ENCODE measurements at regions of chr7 and their contacts with region 1.

Region 1: GRCh38 chr7:92722541-92722940 is 113.8 kb downstream of the CDK6 start:
- DNase-seq: no peak
- ATAC-seq: no peak
- H3K4me3 ChIP-seq: no peak overlapping the region
- H3K4me3 Mint-ChIP-seq: no peak overlapping the region
- H3K27ac ChIP-seq: no peak overlapping the region
- H3K27ac Mint-ChIP-seq: peak overlapping the region in 1 of 2 donors; percentile 28
- H3K4me1 ChIP-seq: peaks cover 9 to 16% of the 10 kb centered on the region in 2 experiments
- H3K4me1 Mint-ChIP-seq: peaks cover 25 to 47% (median 42%) of the 10 kb centered on the region in 3 donors
- H3K27me3 ChIP-seq: no peaks in the 10 kb centered on the region
- H3K27me3 Mint-ChIP-seq: no peaks in the 10 kb centered on the region

Region 2: GRCh38 chr7:92708111-92709042 is 14.2 kb before region 1 on chr7:
- CTCF ChIA-PET with region 1: no interaction called
- POLR2A ChIA-PET with region 1: no interaction called
- DNase-seq: no peak
- ATAC-seq: no peak
- H3K4me3 ChIP-seq: no peak overlapping the region
- H3K4me3 Mint-ChIP-seq: no peak overlapping the region
- H3K27ac ChIP-seq: no peak overlapping the region
- H3K27ac Mint-ChIP-seq: peak overlapping the region in 1 of 2 donors; percentile 48
- H3K4me1 ChIP-seq: no peaks in the 10 kb centered on the region
- H3K4me1 Mint-ChIP-seq: peaks cover 3 to 25% (median 18%) of the 10 kb centered on the region in 3 donors
- H3K27me3 ChIP-seq: no peaks in the 10 kb centered on the region
- H3K27me3 Mint-ChIP-seq: no peaks in the 10 kb centered on the region

Region 3: DNA sequence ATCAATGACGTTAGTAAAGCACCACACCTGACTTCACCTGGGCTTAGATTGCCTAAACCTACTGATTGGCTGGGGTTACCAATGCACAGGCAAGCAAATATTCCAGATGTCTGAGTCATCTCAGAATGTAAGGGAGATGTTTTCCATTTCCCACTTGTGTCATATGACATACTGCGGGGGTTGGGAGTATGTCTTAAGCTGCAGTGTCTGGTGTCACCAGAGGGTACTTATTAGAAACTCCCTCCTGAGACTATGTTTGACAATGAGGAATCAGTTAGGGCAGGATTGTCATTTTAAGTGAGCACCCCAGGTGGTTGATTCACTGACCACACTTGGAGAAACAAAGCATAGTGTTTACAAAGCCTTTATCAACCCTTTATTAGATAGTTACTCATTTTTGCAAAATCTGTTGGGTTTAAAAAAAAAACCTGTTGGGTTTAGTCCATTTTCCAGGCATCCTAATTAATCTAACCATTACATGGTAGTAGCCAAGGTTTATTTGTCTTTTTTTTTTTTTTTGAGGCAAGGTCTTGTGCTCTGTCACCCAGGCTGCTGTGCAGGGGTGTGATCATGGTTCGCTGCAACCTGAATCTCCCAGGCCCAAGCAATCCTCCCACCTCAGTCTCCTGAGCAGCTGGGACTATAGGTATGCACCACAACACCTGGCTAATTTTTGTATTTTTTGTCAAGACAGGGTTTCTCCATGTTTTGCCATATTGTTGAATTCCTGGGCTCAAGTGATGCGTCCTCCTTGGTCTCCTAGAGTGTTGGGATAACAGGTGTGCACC is 41.3 kb after region 1 on chr7:
- CTCF ChIA-PET with region 1: interaction called in 1 of 2 experiments, 6 read pairs
- POLR2A ChIA-PET with region 1: interaction called in 1 of 2 experiments, 10 read pairs
- DNase-seq: no peak
- ATAC-seq: no peak
- H3K4me3 ChIP-seq: no peak overlapping the region
- H3K4me3 Mint-ChIP-seq: no peak overlapping the region
- H3K27ac ChIP-seq: no peak overlapping the region
- H3K27ac Mint-ChIP-seq: no peak overlapping the region
- H3K4me1 ChIP-seq: peaks cover 0 to 9% of the 10 kb centered on the region in 2 experiments
- H3K4me1 Mint-ChIP-seq: peaks cover 11 to 46% (median 36%) of the 10 kb centered on the region in 3 donors
- H3K27me3 ChIP-seq: no peaks in the 10 kb centered on the region
- H3K27me3 Mint-ChIP-seq: no peaks in the 10 kb centered on the region